ENCODE measurements at regions of chr7 and their contacts with region 1.

Region 1: GRCh38 chr7:12827920-12828319 is 140.5 kb downstream of the ARL4A start:
- DNase-seq: no peak
- ATAC-seq: peak in 7 of 8 donors; percentile 18 to 85 (median 73)
- H3K4me3 ChIP-seq: no peak overlapping the region
- H3K27ac ChIP-seq: peak overlapping the region in 9 of 10 donors; percentile 59 to 75 (median 70)
- H3K4me1 ChIP-seq: peaks cover 0 to 6% (median 0%) of the 10 kb centered on the region in 9 donors
- H3K27me3 ChIP-seq: no peaks in the 10 kb centered on the region
- CTCF ChIP-seq: no peak

Region 2: DNA sequence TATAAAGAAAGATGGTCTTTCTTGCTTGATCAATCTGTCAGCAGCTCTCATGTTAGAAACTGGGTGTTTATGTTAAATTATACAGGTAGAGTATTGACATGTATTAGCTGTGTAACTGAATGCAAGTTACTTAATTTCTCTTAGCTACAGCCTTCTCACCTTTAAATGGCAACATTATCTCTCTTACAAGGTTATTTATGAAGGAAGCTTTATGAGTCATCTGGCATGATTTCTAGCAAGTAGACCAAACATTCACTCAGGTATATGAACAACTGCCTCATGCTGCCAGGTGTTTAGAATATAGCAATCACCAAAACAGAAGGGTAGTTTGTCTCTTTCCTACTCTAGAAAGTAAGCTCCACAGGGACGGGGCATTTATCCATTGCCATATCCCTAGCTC is 132.0 kb before region 1 on chr7:
- intact Hi-C with region 1: loop called in 1 of 10 experiments (anchors 10 kb)
- DNase-seq: no peak
- ATAC-seq: no peak
- H3K4me3 ChIP-seq: no peak overlapping the region
- H3K27ac ChIP-seq: no peak overlapping the region
- H3K4me1 ChIP-seq: peaks cover 0 to 23% (median under 1%) of the 10 kb centered on the region in 9 donors
- H3K27me3 ChIP-seq: no peaks in the 10 kb centered on the region
- CTCF ChIP-seq: no peak

Region 3: DNA sequence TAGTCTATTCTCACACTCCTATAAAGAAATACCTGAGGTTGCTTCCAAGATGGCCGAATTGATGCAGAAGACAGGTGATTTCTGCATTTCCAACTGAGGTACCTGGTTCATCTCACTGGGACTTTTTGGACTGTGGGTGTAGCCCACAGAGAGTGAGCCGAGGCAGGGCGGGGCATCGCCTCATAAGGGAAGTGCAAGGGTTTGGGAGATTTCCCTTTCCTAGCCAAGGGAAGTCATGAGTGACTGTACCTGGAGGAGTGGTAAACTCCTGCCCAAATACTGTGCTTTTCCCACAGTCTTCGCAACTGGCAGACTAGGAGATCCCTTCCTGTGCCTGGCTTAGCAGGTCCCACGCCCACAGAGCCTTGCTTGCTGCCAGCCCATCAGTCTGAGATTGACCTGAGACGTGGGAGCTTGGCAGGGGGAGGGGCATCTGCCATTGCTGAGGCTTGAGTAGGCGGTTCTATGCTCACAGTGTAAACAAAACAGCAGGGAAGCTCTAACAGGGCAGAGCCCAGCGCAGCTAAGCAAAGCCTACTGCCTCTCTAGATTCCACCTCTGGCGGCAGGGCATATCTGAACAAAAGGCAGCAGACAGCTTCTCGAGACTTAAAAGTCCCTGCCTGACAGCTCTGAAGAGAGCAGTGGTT is 11.7 kb after region 1 on chr7:
- intact Hi-C with region 1: no loop called
- DNase-seq: no peak
- ATAC-seq: no peak
- H3K4me3 ChIP-seq: peak overlapping the region in 1 of 10 donors; percentile 11
- H3K27ac ChIP-seq: no peak overlapping the region
- H3K4me1 ChIP-seq: no peaks in the 10 kb centered on the region
- H3K27me3 ChIP-seq: no peaks in the 10 kb centered on the region
- CTCF ChIP-seq: no peak

Measured in heart right ventricle (tissue), 16 donors.